GM12878 (cell line): ENCODE measurements at regions of chr2 and their contacts with region 1.

Region 1: GRCh38 chr2:45915523-45915922 is 264.0 kb downstream of the PRKCE start:
- DNase-seq: no peak
- ATAC-seq: no peak
- H3K4me3 ChIP-seq: no peak overlapping the region
- H3K27ac ChIP-seq: no peak overlapping the region
- H3K4me1 ChIP-seq: peaks cover 26% of the 10 kb centered on the region
- H3K27me3 ChIP-seq: no peaks in the 10 kb centered on the region
- CTCF ChIP-seq: no peak
- EP300 ChIP-seq: no peak
- POLR2A ChIP-seq: no peak
- RAD21 ChIP-seq: no peak

Region 2: DNA sequence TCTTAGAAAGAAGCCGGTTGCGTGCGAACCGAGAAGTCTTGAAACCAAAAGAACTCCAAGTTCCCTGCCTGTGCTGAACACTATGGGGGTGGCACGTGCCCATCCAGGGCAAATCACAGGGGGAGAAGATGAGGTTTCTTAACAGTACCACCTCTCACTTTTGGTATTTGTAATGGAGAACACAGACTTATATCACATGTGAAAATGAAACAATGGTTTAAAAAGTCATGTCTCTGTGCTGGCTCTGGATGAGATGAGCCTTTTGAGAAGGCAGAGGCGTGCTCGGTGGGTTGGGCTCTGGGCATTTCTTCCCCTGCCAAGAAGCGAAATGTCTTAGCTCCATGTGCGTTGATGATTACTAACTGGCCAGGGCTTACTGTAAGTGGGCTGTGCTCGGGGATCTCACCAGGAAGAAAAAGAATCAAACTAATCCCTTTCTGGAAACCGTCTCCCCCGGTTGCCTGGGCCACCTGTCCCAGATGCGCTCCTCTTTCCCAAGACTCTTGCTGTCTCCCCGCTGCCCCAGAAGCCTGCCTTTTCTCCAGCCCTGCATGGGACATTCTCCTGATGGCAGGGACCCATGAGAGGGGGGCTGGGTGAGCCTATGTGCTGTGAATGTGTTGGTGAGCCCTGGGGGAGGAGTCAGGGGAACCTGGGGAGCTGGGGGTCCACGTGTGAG is 11.1 kb before region 1 on chr2:
- CTCF ChIA-PET with region 1: interaction called, 4 read pairs
- POLR2A ChIA-PET with region 1: interaction called, 13 read pairs
- RAD21 ChIA-PET with region 1: interaction called, 10 read pairs
- SMC1A ChIA-PET with region 1: interaction called, 31 read pairs
- in situ Hi-C with region 1: no loop called
- intact Hi-C with region 1: no loop called
- DNase-seq: no peak
- ATAC-seq: peak; percentile 97
- H3K4me3 ChIP-seq: no peak overlapping the region
- H3K27ac ChIP-seq: peak overlapping the region; percentile 79
- H3K4me1 ChIP-seq: peaks cover 35% of the 10 kb centered on the region
- H3K27me3 ChIP-seq: no peaks in the 10 kb centered on the region
- CTCF ChIP-seq: no peak
- EP300 ChIP-seq: peak; percentile 52 to 54; a peak in 1 of 4 replicates
- POLR2A ChIP-seq: no peak
- RAD21 ChIP-seq: no peak

Region 3: DNA sequence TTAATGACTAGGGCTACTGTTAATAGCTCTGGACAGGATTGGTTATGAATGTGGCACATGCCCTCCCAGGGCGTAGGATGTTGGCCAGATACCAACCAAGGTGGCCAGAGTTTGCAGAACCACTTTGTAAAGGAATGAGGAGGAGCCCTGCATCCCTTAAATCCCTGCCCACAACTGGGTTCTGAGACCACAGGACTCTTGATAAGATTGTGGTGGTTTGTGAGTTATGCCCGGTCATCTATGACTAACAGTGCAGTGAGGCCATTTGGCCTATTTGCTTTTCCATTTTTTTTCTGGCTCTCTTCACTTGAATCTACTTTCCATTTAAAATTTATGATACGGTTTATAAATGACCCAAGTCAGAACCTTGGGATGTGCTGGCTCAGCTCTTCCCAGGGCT is 30.5 kb after region 1 on chr2:
- CTCF ChIA-PET with region 1: no interaction called
- POLR2A ChIA-PET with region 1: no interaction called
- RAD21 ChIA-PET with region 1: no interaction called
- SMC1A ChIA-PET with region 1: no interaction called
- in situ Hi-C with region 1: no loop called
- intact Hi-C with region 1: no loop called
- DNase-seq: no peak
- ATAC-seq: no peak
- H3K4me3 ChIP-seq: no peak overlapping the region
- H3K27ac ChIP-seq: no peak overlapping the region
- H3K4me1 ChIP-seq: no peaks in the 10 kb centered on the region
- H3K27me3 ChIP-seq: no peaks in the 10 kb centered on the region
- CTCF ChIP-seq: no peak
- EP300 ChIP-seq: no peak
- POLR2A ChIP-seq: no peak
- RAD21 ChIP-seq: no peak

Region 4: DNA sequence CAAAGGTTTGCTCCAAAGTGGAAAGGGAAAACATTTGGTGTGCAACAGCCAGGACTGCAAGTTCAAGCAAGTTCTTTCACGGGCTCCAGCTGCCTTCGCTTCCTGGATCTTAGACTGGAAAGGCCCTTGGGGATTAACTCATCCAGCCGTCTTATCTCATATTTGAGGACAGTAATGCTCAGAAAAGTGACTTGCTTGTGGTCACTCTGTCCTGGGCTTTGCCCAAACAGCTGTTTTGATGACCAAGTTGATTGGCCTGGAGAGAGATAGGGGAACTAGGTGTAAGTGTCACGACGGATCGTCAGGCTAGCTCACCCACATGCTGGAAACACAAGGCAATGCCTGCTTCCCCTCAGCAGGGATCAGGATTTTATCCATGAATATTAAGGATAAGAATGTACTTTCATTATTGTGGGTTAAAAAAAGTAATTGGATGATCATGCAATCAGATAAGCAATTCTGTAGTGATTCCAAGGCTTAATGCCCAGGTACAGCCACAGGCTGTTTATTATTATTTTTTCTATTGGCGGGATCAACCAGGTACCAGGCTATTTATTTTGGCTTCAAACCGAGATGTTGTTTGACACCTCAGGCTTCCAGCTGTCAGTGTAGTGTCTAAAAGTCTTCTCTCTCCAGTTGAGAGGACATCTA is 219.1 kb after region 1 on chr2:
- CTCF ChIA-PET with region 1: no interaction called
- POLR2A ChIA-PET with region 1: no interaction called
- RAD21 ChIA-PET with region 1: no interaction called
- SMC1A ChIA-PET with region 1: no interaction called
- in situ Hi-C with region 1: no loop called
- intact Hi-C with region 1: no loop called
- DNase-seq: no peak
- ATAC-seq: no peak
- H3K4me3 ChIP-seq: no peak overlapping the region
- H3K27ac ChIP-seq: no peak overlapping the region
- H3K4me1 ChIP-seq: no peaks in the 10 kb centered on the region
- H3K27me3 ChIP-seq: no peaks in the 10 kb centered on the region
- CTCF ChIP-seq: no peak
- EP300 ChIP-seq: no peak
- POLR2A ChIP-seq: no peak
- RAD21 ChIP-seq: no peak